ENCODE measurements at regions of chr3 and their contacts with region 1.

Region 1: DNA sequence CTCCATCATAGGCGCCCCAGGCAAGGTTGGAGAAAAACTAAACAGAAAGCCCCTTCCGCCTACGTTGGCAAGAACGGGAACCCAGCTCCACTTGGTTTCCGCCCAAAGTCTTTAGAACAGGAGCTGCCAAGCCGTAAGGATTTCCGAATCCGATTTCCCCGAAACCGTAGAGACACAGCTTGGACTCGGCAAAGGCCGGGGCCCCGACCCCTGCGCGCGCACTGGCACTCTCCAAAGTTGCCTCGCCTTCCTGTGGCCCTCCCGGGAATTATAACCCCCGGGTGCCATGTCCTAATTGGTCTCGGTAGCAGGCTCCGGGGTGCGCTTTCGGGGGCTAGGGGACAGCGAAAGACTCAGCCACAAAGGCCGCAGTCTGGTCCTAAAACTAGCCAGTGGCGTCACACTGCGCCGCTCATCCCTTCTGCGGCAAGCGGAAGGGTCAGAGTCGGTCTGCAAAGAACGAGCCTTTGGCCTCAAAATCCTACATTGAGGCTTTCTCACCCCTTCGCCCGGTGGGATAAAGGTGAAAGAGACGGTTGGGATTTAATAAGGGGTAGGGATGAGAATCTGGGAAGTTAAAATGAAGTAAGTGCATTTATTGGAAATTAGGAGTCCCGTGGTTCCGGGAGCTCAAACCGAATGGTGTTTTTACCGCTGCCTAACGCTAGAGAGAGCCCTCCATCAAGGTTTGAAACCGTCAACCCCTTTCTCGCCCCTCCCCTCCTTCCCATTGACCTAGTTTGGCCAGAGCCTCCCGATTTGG is 6.8 kb downstream of the BCL6 start:
- DNase-seq: peak; percentile 82
- ATAC-seq: peak; percentile 50
- H3K4me3 Mint-ChIP-seq: peak overlapping the region; percentile 93
- H3K27ac Mint-ChIP-seq: peak overlapping the region; percentile 98
- H3K4me1 Mint-ChIP-seq: peaks cover 47% of the 10 kb centered on the region
- H3K27me3 Mint-ChIP-seq: no peaks in the 10 kb centered on the region
- CTCF ChIP-seq: peak; percentile 79

Region 2: DNA sequence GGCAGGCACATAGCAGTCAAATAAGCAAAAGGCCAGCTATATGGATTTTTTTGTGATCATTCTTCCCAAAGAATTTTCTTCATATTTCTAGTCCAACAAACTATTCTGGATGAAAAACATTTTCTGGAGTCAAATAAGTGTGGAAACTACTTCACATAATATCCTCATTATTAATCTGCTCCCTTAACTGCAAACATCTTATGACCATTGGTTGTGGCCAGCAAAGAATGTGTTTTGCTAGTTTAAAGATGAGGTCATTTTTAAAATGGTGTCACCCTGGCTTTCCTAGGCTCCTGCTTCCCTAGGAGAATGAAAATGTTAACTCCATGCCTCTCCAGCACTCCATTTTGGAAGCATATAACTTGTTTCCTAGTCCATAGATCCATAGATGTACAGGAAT is 187.1 kb before region 1 on chr3:
- CTCF ChIA-PET with region 1: no interaction called
- POLR2A ChIA-PET with region 1: no interaction called
- intact Hi-C with region 1: no loop called
- DNase-seq: no peak
- ATAC-seq: no peak
- H3K4me3 Mint-ChIP-seq: no peak overlapping the region
- H3K27ac Mint-ChIP-seq: no peak overlapping the region
- H3K4me1 Mint-ChIP-seq: no peaks in the 10 kb centered on the region
- H3K27me3 Mint-ChIP-seq: peaks cover 19% of the 10 kb centered on the region
- CTCF ChIP-seq: no peak

Region 3: GRCh38 chr3:187694801-187695200 is 43.7 kb before region 1 on chr3:
- CTCF ChIA-PET with region 1: no interaction called
- POLR2A ChIA-PET with region 1: no interaction called
- intact Hi-C with region 1: no loop called
- DNase-seq: no peak
- ATAC-seq: no peak
- H3K4me3 Mint-ChIP-seq: no peak overlapping the region
- H3K27ac Mint-ChIP-seq: no peak overlapping the region
- H3K4me1 Mint-ChIP-seq: no peaks in the 10 kb centered on the region
- H3K27me3 Mint-ChIP-seq: peaks cover 18% of the 10 kb centered on the region
- CTCF ChIP-seq: no peak

Region 4: DNA sequence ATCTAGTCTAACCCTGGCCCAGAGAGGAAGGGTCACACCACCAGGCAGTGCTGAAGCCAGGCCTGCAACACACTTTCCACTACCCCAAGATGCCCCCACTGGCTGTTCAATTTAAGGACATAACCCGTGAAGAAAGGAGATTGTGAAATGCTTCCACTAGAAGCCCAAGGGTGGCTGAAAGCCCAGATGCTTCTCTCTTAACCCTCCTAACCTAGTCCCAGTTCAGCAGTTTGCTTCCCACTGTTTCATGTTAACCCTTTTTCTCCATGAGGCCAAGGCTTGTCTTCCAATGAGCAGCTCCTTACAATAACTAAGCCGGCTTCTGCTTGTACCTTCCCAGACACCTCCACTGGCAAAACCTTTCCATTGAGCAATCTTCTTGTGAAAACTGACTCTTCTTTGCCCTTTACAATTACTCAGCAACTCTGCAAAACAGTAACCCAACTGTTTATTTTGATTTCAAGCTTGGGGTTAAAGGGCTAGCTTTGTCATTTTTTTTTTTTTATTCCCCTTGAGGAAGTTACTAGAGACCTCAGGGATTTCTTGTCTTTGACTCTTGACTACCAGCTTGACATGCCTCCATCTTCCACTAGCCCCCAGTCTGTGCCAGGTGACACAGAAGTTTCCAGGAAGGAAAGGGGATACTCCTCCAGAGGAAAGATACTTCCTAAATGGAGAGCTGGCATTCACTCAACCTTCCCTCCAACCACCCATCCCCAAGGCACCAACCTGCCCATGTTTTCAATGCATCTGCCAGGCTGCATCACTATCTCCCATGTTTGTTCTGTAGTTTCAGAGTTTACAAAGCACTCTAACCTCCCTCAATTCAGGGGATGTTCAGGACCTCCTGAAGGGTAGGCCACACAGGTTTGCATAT is 216.8 kb after region 1 on chr3:
- CTCF ChIA-PET with region 1: interaction called, 20 read pairs
- POLR2A ChIA-PET with region 1: no interaction called
- intact Hi-C with region 1: no loop called
- DNase-seq: no peak
- ATAC-seq: no peak
- H3K4me3 Mint-ChIP-seq: no peak overlapping the region
- H3K27ac Mint-ChIP-seq: no peak overlapping the region
- H3K4me1 Mint-ChIP-seq: peaks cover 41% of the 10 kb centered on the region
- H3K27me3 Mint-ChIP-seq: no peaks in the 10 kb centered on the region
- CTCF ChIP-seq: no peak

Region 5: DNA sequence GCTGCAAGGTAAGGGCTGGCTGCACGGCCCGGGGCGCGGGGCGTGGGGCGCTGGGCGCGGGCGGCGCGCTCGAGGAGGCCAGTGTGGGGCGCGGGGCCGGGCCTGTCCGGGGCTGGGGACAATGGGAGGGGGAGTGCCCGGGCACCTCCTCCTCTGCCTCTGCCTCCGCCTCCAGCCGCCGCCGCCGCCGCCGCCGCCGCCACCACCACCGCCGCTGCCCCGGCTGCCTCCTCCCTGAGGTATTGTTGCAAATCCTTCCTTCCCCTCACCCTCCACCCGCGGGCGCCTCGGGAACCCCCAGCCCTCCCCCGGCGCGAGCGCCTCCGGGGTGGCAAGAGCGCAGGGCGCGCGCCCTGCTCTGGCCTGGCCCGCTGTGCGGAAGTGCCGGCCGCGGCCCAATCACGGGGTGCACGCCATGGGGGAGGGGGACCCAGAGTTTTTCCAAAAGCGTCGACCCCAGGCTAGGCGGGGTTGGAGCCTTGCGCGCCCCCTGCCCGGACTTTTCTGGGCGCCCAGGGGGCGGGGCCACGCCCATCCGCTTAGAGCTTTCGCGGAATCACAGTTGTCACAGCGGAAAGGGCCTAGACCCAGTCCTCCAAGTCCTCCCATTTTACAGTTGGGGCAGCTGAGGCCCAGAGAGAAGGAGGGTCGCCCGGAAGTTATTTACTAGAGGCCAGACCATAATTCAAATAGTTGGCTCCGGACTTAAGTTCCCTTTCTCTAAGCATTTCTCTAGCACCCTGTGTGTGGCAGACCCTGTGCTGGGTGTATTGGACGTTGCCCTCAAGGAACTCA is 415.7 kb after region 1 on chr3 and contains the start of gene LPP:
- CTCF ChIA-PET with region 1: interaction called, 23 read pairs
- POLR2A ChIA-PET with region 1: interaction called, 8 read pairs
- intact Hi-C with region 1: loop called (anchors 5 kb)
- DNase-seq: peak; percentile 87
- ATAC-seq: peak; percentile 83
- H3K4me3 Mint-ChIP-seq: peak within 1 kb of the TSS; percentile 75
- H3K27ac Mint-ChIP-seq: peak within 1 kb of the TSS; percentile 92
- H3K4me1 Mint-ChIP-seq: peaks cover 57% of the 10 kb centered on the region
- H3K27me3 Mint-ChIP-seq: no peaks in the 10 kb centered on the region
- CTCF ChIP-seq: no peak
- total RNA-seq, gene LPP: 16.4 to 22.6 TPM

Region 6: DNA sequence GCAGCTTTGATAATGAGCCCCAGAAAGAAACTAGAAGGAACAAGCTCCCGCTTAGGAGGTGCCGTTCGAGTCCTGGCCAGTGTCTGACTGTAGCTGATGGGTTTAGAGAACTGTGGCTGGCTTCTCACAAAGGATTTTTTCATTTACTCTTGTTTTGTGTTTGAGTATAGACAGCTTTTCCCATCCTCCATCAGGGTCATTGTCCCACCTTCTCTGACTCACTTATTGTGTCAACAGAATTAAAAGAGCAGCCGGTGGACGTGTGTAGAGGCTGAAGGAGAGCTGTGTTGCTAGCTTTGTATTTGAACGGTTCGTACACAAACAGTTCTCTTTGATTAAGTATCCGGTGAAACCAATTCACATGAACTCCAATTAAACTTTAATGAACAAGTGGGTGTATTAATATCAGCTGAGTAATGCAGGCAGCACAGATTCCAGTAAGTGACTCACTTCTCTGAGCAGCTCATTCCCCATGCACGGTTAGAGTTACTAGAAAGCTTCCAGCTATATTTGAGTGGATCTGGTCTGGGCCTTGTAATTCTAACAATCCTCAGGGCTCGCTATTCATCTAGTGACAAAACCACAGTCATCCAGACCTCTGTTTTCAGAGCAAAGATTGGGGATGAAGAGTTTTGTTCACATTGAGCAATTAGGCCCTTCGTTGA is 556.4 kb after region 1 on chr3:
- CTCF ChIA-PET with region 1: interaction called, 11 read pairs
- POLR2A ChIA-PET with region 1: interaction called, 5 read pairs
- intact Hi-C with region 1: no loop called
- DNase-seq: no peak
- ATAC-seq: no peak
- H3K4me3 Mint-ChIP-seq: no peak overlapping the region
- H3K27ac Mint-ChIP-seq: peak overlapping the region; percentile 27
- H3K4me1 Mint-ChIP-seq: peaks cover 71% of the 10 kb centered on the region
- H3K27me3 Mint-ChIP-seq: no peaks in the 10 kb centered on the region
- CTCF ChIP-seq: no peak

Region 7: GRCh38 chr3:188473591-188474288 is 735.2 kb after region 1 on chr3:
- CTCF ChIA-PET with region 1: interaction called, 11 read pairs
- POLR2A ChIA-PET with region 1: no interaction called
- intact Hi-C with region 1: no loop called
- DNase-seq: no peak
- ATAC-seq: no peak
- H3K4me3 Mint-ChIP-seq: no peak overlapping the region
- H3K27ac Mint-ChIP-seq: no peak overlapping the region
- H3K4me1 Mint-ChIP-seq: peaks cover 3% of the 10 kb centered on the region
- H3K27me3 Mint-ChIP-seq: no peaks in the 10 kb centered on the region
- CTCF ChIP-seq: no peak

Region 8: GRCh38 chr3:188954590-188955208 is 1216.2 kb after region 1 on chr3:
- CTCF ChIA-PET with region 1: interaction called, 346 read pairs
- POLR2A ChIA-PET with region 1: interaction called, 13 read pairs
- intact Hi-C with region 1: loop called (anchors 1 kb)
- DNase-seq: peak; percentile 78
- ATAC-seq: peak; percentile 56
- H3K4me3 Mint-ChIP-seq: no peak overlapping the region
- H3K27ac Mint-ChIP-seq: no peak overlapping the region
- H3K4me1 Mint-ChIP-seq: peaks cover 40% of the 10 kb centered on the region
- H3K27me3 Mint-ChIP-seq: no peaks in the 10 kb centered on the region
- CTCF ChIP-seq: peak; percentile 90